AG04450 (cell line): ENCODE measurements at regions of chr6 and their contacts with region 1.

Region 1: GRCh38 chr6:77466055-77466450 is 2.8 kb upstream of the HTR1B start:
- DNase-seq: peak; percentile 51
- H3K4me3 ChIP-seq: peak overlapping the region; percentile 73
- H3K27ac ChIP-seq: peak overlapping the region; percentile 53
- H3K27me3 ChIP-seq: peaks cover 16% of the 10 kb centered on the region
- CTCF ChIP-seq: peak; percentile 94

Region 2: DNA sequence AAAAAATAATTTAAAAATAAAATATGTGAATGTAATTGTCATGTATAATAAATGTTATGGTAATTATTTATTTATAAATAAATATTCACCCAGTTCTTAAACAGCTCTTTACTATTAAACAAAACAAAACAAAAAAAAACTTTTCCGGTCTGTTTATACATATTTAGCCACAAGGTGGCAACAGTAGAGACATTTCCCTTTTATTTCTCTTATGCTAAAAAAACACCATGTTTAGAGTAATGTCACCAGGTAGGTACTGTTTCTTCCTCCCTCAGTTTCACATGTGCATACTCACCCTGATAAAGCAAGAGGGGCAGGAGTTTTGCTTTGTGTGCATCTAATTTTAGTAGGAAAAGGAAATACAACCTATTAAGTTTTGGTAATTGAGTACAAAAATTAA is 783.2 kb before region 1 on chr6:
- CTCF ChIA-PET with region 1: interaction called, 15 read pairs
- POLR2A ChIA-PET with region 1: no interaction called
- DNase-seq: no peak
- H3K4me3 ChIP-seq: no peak overlapping the region
- H3K27ac ChIP-seq: no peak overlapping the region
- H3K27me3 ChIP-seq: no peaks in the 10 kb centered on the region
- CTCF ChIP-seq: peak; percentile 38

Region 3: DNA sequence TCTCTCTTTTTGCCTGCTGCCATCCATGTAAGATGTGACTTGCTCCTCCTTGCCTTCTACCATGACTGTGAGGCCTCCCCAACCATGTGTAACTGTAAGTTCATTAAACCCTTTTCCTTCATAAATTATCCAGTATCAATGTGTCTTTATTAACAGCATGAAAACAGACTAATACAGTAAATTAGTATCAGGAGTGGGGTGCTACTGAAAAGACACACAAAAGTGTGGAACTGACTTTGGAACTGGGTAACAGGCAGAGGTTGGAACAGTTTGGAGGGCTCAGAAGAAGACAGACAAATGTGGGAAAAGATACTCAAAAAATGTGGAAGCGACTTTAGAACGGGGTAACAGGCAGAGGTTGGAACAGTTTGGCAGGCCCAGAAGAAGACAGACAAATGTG is 192.1 kb before region 1 on chr6:
- CTCF ChIA-PET with region 1: no interaction called
- POLR2A ChIA-PET with region 1: no interaction called
- DNase-seq: no peak
- H3K4me3 ChIP-seq: no peak overlapping the region
- H3K27ac ChIP-seq: no peak overlapping the region
- H3K27me3 ChIP-seq: no peaks in the 10 kb centered on the region
- CTCF ChIP-seq: no peak

Region 4: GRCh38 chr6:77447254-77447653 is 18.8 kb before region 1 on chr6:
- CTCF ChIA-PET with region 1: interaction called, 10 read pairs
- POLR2A ChIA-PET with region 1: no interaction called
- DNase-seq: no peak
- H3K4me3 ChIP-seq: no peak overlapping the region
- H3K27ac ChIP-seq: no peak overlapping the region
- H3K27me3 ChIP-seq: no peaks in the 10 kb centered on the region
- CTCF ChIP-seq: no peak

Region 5: GRCh38 chr6:78810146-78810545 is 1344.1 kb after region 1 on chr6:
- CTCF ChIA-PET with region 1: interaction called, 19 read pairs
- POLR2A ChIA-PET with region 1: no interaction called
- DNase-seq: peak; percentile 4
- H3K4me3 ChIP-seq: no peak overlapping the region
- H3K27ac ChIP-seq: no peak overlapping the region
- H3K27me3 ChIP-seq: no peaks in the 10 kb centered on the region
- CTCF ChIP-seq: peak; percentile 79